HepG2 (cell line): ENCODE measurements at regions of chr7 and their contacts with region 1.

Region 1: DNA sequence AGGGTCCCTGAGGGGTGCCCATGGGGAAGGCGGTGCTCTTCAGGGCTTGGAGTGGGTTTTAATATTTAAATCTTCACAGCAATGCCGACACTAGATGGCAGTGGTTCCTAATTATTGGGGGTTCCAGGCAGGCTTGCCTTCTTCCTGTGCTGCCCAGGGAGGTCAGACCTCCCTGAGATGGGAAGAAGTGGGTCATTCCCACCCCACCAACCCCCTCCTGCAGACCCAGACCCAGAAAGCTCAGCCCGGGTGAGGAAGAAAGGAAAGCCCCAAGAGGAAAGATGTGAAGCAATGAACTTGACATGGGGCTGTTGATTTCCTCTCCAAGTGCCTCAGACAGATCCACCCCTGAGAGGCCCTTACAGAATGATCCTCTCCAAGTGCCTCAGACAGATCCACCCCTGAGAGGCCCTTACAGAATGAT is 85.1 kb upstream of the LANCL2 start:
- DNase-seq: peak; percentile 55
- ATAC-seq: peak; percentile 93
- H3K4me3 ChIP-seq: no peak overlapping the region
- H3K27ac ChIP-seq: no peak overlapping the region
- H3K4me1 ChIP-seq: no peaks in the 10 kb centered on the region
- H3K27me3 ChIP-seq: peaks cover 0 to 22% of the 10 kb centered on the region in 2 experiments; a peak in 3 of 5 replicates
- CTCF ChIP-seq: peak; percentile 86
- EP300 ChIP-seq: no peak
- POLR2A ChIP-seq: no peak
- RAD21 ChIP-seq: no peak; the same call in 1 of the 2 replicates

Region 2: DNA sequence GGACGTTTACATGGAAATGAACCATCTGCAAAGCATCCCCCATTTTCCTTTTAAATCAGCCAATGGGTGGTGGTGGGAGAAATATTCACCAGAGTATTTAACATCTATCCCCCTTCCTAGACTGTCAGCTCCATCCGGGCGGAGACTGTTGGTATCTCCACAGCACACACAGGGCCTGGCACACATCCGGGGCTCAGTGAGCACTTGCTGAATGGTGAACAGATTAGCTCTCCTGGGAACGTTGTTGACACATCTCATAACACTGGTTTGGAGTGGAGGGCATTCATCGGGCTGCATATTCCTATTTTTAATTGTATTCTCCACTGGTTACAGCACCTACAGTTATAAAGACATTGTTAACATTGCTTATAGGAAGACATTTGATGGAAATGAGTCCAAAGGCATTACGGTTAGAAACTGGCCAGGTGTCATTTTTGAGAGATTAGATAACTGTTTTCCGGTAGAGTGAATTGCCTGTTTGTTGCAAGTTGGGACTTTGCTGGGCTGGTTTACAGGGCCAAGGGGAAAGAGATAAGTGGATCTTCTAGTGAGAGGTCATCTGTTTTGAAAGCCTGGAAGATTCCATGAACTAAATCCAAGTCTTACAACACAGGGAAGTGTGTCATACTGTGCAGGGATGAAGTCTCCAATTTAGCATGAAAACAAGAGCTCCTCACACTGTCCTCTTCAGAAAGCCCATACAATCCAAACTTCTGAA is 159.4 kb before region 1 on chr7:
- CTCF ChIA-PET with region 1: no interaction called
- POLR2A ChIA-PET with region 1: no interaction called
- in situ Hi-C with region 1: no loop called
- intact Hi-C with region 1: no loop called
- DNase-seq: no peak
- ATAC-seq: no peak
- H3K4me3 ChIP-seq: no peak overlapping the region
- H3K27ac ChIP-seq: no peak overlapping the region
- H3K4me1 ChIP-seq: peaks cover 17% of the 10 kb centered on the region; the same call in 1 of the 2 replicates
- H3K27me3 ChIP-seq: no peaks in the 10 kb centered on the region
- CTCF ChIP-seq: no peak
- EP300 ChIP-seq: no peak
- POLR2A ChIP-seq: no peak
- RAD21 ChIP-seq: no peak

Region 3: GRCh38 chr7:55348499-55348898 is 68.5 kb after region 1 on chr7:
- CTCF ChIA-PET with region 1: no interaction called
- POLR2A ChIA-PET with region 1: no interaction called
- in situ Hi-C with region 1: no loop called
- intact Hi-C with region 1: loop called (anchors 10 kb)
- DNase-seq: no peak
- ATAC-seq: no peak
- H3K4me3 ChIP-seq: no peak overlapping the region
- H3K27ac ChIP-seq: no peak overlapping the region
- H3K4me1 ChIP-seq: no peaks in the 10 kb centered on the region
- H3K27me3 ChIP-seq: 0 out of 5 replicates have a peak, but pooled peaks cover 0 to 3% of the 10 kb centered on the region in 2 experiments
- CTCF ChIP-seq: no peak
- EP300 ChIP-seq: no peak
- POLR2A ChIP-seq: no peak
- RAD21 ChIP-seq: no peak

Region 4: DNA sequence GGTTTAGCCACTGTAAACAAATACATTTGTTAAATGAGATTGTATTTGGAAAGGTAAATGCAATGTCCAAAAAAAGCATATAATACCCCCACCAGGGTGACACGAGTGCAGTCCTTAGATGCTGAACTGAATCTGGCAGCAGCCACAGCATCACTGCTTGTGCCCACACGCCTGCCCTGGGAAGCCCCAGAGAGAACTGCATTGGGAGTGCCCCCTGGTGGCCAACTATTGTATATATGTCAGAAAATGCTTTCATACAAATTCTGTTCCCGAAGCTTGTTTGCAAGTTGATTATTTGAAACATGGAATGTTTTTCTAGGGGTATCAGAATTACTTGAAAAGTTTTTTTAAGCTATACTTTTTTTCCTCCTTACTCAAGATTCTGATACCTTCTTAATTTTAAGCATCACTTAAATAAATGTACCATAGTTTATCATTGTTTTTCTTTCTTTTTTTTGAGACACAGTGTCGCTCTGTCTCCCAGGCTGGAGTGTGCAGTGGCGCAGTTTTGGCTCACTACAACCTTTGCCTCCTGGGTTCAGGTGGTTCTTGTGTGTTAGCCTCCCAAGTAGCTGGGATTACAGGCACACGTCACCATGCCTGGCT is 135.2 kb after region 1 on chr7:
- CTCF ChIA-PET with region 1: interaction called, 31 read pairs
- POLR2A ChIA-PET with region 1: no interaction called
- in situ Hi-C with region 1: loop called (anchors 5 kb)
- intact Hi-C with region 1: loop called (anchors 1 kb)
- DNase-seq: peak; percentile 62
- ATAC-seq: peak; percentile 95
- H3K4me3 ChIP-seq: no peak overlapping the region
- H3K27ac ChIP-seq: no peak overlapping the region
- H3K4me1 ChIP-seq: peaks cover 3% of the 10 kb centered on the region
- H3K27me3 ChIP-seq: no peaks in the 10 kb centered on the region
- CTCF ChIP-seq: peak; percentile 75
- EP300 ChIP-seq: no peak
- POLR2A ChIP-seq: no peak
- RAD21 ChIP-seq: peak; percentile 53; the same call in 1 of the 2 replicates

Region 5: GRCh38 chr7:55423277-55423711 is 143.3 kb after region 1 on chr7:
- CTCF ChIA-PET with region 1: no interaction called
- POLR2A ChIA-PET with region 1: no interaction called
- in situ Hi-C with region 1: loop called (anchors 5 kb)
- intact Hi-C with region 1: no loop called
- DNase-seq: no peak
- ATAC-seq: peak; percentile 55; the same call in 2 of the 3 replicates
- H3K4me3 ChIP-seq: no peak overlapping the region
- H3K27ac ChIP-seq: no peak overlapping the region
- H3K4me1 ChIP-seq: peaks cover 20% of the 10 kb centered on the region
- H3K27me3 ChIP-seq: no peaks in the 10 kb centered on the region
- CTCF ChIP-seq: no peak
- EP300 ChIP-seq: no peak
- POLR2A ChIP-seq: no peak
- RAD21 ChIP-seq: no peak